ENCODE measurements at regions of chr9 and their contacts with region 1.

Region 1: DNA sequence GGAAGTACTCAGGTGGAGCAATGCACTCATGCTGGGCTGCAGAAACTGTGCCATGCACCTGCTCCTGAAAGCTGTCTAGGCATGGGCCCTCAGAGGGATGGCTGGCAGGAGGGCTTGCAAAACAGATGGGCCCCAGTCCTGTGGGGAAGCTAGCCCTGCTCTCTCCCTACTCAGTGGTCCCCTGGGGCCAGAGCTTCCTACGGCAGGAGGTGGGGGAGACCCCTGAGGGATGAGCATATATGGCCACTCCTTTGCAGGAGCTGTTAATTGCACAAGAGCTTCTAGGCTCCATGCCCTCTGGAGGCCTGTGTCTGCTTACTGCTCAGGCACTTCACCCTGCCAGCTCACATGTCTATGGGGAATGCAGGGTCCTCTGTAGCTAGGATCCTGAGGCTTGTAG is 545.3 kb upstream of the PTPRD start:
- DNase-seq: no peak
- ATAC-seq: no peak
- H3K4me3 ChIP-seq: no peak overlapping the region
- H3K4me3 Mint-ChIP-seq: no peak overlapping the region
- H3K27ac ChIP-seq: no peak overlapping the region
- H3K27ac Mint-ChIP-seq: no peak overlapping the region
- H3K4me1 ChIP-seq: no peaks in the 10 kb centered on the region
- H3K4me1 Mint-ChIP-seq: no peaks in the 10 kb centered on the region
- H3K27me3 ChIP-seq: no peaks in the 10 kb centered on the region
- H3K27me3 Mint-ChIP-seq: no peaks in the 10 kb centered on the region
- CTCF ChIP-seq: no peak

Region 2: DNA sequence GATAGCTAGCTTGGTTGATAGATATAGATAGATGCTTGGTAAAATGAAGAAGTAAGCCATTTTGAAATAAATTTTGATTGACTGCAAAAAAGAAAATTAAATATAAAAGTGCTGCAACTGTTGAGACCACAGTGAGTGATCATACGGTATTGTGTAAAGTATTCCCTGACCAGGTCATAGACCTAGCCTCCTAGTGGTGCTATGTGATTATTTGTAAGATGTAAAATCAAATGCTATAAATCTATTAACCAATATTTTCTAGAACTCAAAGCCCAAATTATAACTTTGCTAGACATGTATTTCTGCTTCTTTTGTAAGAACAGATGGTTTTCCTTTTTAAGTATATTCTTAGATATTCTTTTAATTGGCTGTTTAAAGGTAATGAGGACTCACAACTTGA is 65.1 kb before region 1 on chr9:
- CTCF ChIA-PET with region 1: no interaction called
- POLR2A ChIA-PET with region 1: no interaction called
- intact Hi-C with region 1: loop called in 1 of 2 experiments (anchors 10 kb)
- DNase-seq: no peak
- ATAC-seq: no peak
- H3K4me3 ChIP-seq: no peak overlapping the region
- H3K4me3 Mint-ChIP-seq: no peak overlapping the region
- H3K27ac ChIP-seq: no peak overlapping the region
- H3K27ac Mint-ChIP-seq: no peak overlapping the region
- H3K4me1 ChIP-seq: no peaks in the 10 kb centered on the region
- H3K4me1 Mint-ChIP-seq: no peaks in the 10 kb centered on the region
- H3K27me3 ChIP-seq: no peaks in the 10 kb centered on the region
- H3K27me3 Mint-ChIP-seq: no peaks in the 10 kb centered on the region
- CTCF ChIP-seq: no peak